Activated CD4-positive, alpha-beta T cell treated with anti-CD3 and anti-CD28 coated beads for 36 hours (primary cell): ENCODE measurements at regions of chr2 and their contacts with region 1.

Region 1: DNA sequence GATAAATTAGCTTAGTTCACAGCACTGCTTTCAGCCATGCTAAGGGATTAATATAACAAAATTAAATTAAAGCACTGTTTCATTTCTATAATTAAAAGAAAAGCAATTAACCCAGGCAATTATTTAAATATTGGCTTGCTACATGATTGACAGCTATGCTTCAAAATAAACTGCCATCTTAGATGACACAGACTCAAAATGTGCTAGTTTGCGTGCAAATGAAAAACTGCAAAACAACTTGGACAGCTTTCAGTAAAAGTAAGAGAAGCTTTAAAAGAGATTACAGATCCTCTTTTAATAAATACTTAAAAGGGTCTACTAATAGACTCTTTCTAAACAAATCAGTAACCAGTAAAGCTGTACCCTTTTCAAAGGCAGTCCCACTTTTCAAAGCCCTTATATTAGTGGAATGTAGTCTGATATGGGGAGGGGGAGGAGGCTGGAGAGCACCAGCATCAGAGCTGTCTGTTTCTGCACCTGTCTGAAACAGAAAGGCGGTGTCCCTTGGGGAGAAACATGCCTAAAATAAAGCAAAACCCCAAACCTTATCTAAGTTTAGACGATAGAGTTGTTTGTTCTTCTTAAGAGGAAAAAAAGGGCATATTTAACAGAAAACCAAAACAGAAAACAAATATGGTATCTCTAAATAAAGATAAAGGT is 20.8 kb downstream of the EIF2AK3 start:
- DNase-seq: no peak
- ATAC-seq: no peak
- H3K4me3 Mint-ChIP-seq: no peak overlapping the region
- H3K27ac Mint-ChIP-seq: no peak overlapping the region
- H3K4me1 Mint-ChIP-seq: peaks cover 17% of the 10 kb centered on the region
- H3K27me3 Mint-ChIP-seq: no peaks in the 10 kb centered on the region

Region 2: GRCh38 chr2:88620015-88620414 is 13.5 kb after region 1 on chr2:
- CTCF ChIA-PET with region 1: interaction called, 3 read pairs
- POLR2A ChIA-PET with region 1: no interaction called
- intact Hi-C with region 1: loop called in 1 of 2 experiments (anchors 2 kb)
- DNase-seq: no peak
- ATAC-seq: no peak
- H3K4me3 Mint-ChIP-seq: no peak overlapping the region
- H3K27ac Mint-ChIP-seq: no peak overlapping the region
- H3K4me1 Mint-ChIP-seq: peaks cover 32% of the 10 kb centered on the region
- H3K27me3 Mint-ChIP-seq: no peaks in the 10 kb centered on the region